ENCODE measurements at regions of chr12 and their contacts with region 1.

Region 1: GRCh38 chr12:8544295-8544694 is 3.6 kb upstream of the CLEC4E start:
- H3K4me3 ChIP-seq: no peak overlapping the region
- H3K27ac ChIP-seq: no peak overlapping the region
- H3K4me1 ChIP-seq: no peaks in the 10 kb centered on the region
- CTCF ChIP-seq: peak; percentile 31; the same call in 1 of the 2 replicates

Region 2: GRCh38 chr12:8501720-8502119 is 42.6 kb before region 1 on chr12:
- CTCF ChIA-PET with region 1: interaction called, 11 read pairs
- POLR2A ChIA-PET with region 1: no interaction called
- H3K4me3 ChIP-seq: no peak overlapping the region
- H3K27ac ChIP-seq: no peak overlapping the region
- H3K4me1 ChIP-seq: no peaks in the 10 kb centered on the region
- CTCF ChIP-seq: no peak

Region 3: DNA sequence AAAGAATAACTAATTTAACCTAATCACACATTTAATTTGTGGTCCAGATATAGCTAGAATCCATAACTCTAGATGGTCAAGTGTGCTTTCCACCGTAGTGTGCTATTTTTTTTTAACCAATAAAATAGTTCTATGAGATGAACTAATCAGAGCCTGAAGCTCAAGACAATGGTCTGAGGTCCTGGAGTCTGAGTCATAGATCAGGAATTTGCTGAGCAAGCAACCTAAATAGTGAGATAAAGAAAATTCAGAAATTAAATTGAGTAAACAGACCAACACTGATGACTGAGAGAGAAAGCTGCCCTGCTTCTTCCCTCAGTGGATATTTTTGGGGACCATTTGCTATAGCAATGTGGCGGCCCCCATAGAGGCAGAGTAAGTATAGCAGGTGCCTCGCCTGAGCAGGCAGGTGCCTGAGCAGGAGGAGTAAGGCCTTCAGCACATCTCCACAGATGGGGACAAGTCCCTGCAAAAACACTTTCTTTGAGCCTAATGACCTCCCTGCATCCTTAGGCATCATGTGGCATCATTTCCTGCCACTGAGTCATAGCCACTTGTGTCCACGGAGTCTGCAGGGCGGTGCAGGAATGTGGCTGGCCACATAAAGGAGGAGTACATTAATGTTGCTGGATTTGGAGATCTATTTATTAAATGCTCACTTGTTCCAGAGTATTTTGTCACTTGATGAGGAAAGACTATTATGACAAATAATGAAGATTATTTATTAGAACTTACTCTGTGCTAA is 10.3 kb after region 1 on chr12:
- CTCF ChIA-PET with region 1: interaction called, 24 read pairs
- POLR2A ChIA-PET with region 1: no interaction called
- H3K4me3 ChIP-seq: no peak overlapping the region
- H3K27ac ChIP-seq: no peak overlapping the region
- H3K4me1 ChIP-seq: no peaks in the 10 kb centered on the region
- CTCF ChIP-seq: no peak

Region 4: GRCh38 chr12:8584004-8584403 is 39.7 kb after region 1 on chr12:
- CTCF ChIA-PET with region 1: interaction called, 12 read pairs
- POLR2A ChIA-PET with region 1: no interaction called
- H3K4me3 ChIP-seq: no peak overlapping the region
- H3K27ac ChIP-seq: no peak overlapping the region
- H3K4me1 ChIP-seq: no peaks in the 10 kb centered on the region
- CTCF ChIP-seq: no peak

Region 5: DNA sequence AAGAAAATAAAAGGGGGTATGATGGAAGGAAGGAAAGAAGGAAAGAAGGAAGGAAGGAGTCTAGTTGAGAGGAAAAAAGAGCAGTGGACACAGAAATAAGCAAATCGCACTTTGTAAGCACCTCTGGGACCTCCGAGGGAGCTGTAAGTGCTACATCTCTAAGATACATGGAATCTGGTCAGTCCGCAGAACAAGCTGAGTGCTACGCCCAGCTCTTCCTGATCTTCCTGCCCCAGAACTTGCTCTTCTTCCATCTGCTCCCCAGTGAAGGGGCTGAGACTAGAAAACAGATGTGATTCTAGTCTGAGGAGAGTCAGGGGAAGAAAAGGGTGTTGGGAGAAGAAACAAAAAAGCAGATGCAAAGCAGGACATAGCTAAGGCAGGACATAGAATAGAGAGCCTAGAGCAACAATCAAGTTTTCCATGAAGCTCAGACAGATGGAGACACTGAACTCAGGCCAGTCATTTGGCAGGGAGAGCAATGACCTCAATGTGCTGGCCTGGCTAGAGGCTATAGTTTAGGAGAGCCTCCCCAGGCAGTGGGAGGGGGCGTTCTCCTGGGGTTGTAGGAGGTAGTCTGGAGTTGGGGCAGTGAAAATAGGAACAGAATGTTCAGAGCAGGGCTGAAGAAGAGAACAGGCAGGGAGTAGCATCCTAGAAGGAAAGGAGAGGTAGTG is 120.1 kb after region 1 on chr12:
- CTCF ChIA-PET with region 1: no interaction called
- POLR2A ChIA-PET with region 1: no interaction called
- H3K4me3 ChIP-seq: no peak overlapping the region
- H3K27ac ChIP-seq: no peak overlapping the region
- H3K4me1 ChIP-seq: no peaks in the 10 kb centered on the region
- CTCF ChIP-seq: no peak

Region 6: DNA sequence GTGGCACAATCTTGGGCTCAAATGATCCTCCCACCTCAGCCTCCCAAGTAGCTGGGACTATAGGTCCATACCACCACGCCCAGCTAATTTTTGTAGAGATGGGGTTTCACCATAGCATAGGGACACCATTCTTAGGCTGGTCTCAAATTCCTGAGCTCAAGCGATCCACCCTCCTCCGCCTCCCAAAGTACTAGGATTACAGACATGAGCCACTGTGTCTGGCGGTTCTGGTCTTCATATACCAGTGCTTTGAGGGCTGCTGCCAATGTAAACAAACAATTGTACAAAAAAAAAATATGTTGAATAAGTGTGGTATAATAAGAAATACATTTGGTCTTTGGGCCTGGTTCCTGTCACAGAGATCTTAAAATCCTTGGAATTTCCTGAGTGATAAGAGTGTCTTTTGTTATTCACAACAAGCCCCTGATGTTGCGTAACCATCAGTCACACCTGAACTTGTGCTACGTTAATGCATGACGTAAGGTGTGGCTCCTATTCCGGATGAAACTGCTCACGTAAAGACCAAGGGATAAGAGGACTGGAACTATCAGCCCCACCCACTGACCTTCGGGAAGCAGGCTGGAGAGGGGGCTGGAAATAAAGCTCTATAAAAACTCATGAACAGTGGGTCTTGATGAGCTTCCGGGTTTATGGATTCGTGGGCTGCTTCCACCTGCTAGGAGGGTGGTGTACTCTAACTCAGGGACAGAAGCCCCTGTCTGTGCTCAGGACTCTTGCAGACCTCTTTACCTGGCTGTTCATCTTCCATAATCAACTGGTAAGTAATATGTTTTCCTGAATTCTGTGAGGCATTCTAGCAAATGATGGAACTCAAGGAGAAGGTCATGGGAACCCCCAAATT is 137.0 kb after region 1 on chr12:
- CTCF ChIA-PET with region 1: interaction called, 12 read pairs
- POLR2A ChIA-PET with region 1: interaction called, 3 read pairs
- H3K4me3 ChIP-seq: peak overlapping the region; percentile 20
- H3K27ac ChIP-seq: no peak overlapping the region
- H3K4me1 ChIP-seq: no peaks in the 10 kb centered on the region
- CTCF ChIP-seq: no peak

Region 7: DNA sequence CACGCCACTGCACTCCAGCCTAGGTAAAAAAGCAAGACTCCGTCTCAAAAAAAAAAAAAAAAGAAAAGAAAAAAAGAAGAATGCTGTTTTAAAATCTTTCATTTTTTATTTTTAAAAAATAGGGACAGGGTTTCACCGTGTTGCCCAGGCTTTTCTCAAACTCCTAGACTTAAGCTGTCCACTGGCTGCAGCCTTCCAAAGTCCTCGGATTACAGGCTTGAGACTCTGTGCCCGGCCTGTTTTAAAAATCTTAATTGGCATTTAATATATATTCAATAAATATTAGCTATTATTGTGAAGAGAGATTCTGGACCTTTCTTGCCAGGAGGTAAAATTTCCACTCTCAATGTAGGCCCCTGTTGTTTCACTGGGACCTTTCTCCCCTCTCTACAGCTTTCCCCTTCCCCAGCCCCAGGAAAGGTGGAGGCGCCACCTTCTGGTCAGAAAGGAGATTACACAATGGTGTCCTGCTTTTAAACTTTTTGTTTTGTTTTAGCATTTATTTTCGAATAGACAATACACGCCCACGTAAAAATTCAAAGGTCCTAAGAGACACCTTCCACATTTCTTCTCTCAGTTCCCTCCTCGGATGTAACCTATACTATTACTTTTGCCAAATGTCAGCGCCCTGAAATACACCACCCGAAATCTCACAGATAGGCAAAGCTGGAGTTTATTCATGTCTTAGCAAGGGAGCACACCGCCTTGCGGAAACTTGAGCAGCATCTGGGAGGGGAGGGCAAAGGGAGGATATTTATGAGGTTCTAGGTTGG is 346.2 kb after region 1 on chr12:
- CTCF ChIA-PET with region 1: interaction called, 10 read pairs
- POLR2A ChIA-PET with region 1: no interaction called
- H3K4me3 ChIP-seq: peak overlapping the region; percentile 39
- H3K27ac ChIP-seq: no peak overlapping the region
- H3K4me1 ChIP-seq: no peaks in the 10 kb centered on the region
- CTCF ChIP-seq: peak; percentile 52; the same call in 1 of the 2 replicates

Measured in HEK293 (cell line).